Activated naive CD4-positive, alpha-beta T cell treated with anti-CD3 and anti-CD28 coated beads for 36 hours (primary cell): ENCODE measurements at regions of chr2 and their contacts with region 1.

Region 1: GRCh38 chr2:97806738-97807618 is 93.6 kb downstream of the ZAP70 start:
- DNase-seq: peak; percentile 90
- H3K4me3 Mint-ChIP-seq: no peak overlapping the region
- H3K27ac Mint-ChIP-seq: no peak overlapping the region
- H3K4me1 Mint-ChIP-seq: no peaks in the 10 kb centered on the region
- H3K27me3 Mint-ChIP-seq: no peaks in the 10 kb centered on the region

Region 2: DNA sequence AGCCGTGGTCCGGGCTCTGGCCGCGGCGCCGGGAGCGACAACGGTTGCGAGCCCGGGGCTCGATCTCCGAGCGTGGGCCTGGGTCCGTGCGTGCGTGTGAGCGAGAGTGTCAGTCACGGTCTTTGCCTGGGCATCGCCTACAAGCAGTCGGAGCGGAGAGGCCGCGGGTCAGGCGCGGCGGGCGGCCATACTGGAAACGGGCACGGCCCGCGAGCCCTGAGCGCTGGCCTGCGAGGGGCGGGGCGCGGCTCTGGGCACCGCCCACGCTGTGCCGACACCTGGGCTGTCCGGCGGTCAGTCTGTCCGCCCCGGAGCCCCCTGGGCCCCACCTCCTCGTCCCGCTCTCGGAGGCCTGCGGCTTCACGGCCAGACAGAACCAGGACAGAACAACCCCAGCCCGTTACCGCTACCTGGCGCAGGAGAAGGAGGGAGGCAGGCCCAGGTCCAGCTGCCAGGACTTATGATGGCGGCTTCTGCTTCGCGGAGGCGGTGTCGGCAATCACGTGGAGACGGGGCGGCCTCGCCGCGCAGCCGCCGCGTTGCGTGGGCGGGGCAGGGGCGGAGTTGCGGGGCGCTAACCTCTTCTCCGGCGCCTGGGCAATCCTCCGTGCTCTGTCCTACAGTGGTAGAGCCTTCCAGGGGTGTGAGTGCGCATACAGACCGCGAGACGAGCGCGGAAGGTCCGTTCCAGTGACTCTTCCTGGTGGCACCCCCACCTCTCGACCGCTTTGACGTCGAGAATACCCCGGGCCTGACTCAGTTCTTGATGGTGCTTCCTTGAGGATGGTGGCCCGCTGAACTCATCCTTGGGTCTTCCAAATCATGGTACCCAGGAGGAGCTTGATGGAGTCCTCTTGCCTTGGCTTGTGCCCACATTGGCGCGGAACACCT is 189.0 kb after region 1 on chr2 and contains the start of gene TMEM131:
- CTCF ChIA-PET with region 1: interaction called, 3 read pairs
- intact Hi-C with region 1: loop called (anchors 1 kb)
- DNase-seq: peak; percentile 96
- H3K4me3 Mint-ChIP-seq: peak within 1 kb of the TSS; percentile 95
- H3K27ac Mint-ChIP-seq: peak within 1 kb of the TSS; percentile 93
- H3K4me1 Mint-ChIP-seq: peaks cover 32% of the 10 kb centered on the region
- H3K27me3 Mint-ChIP-seq: no peaks in the 10 kb centered on the region
- total RNA-seq, gene TMEM131: 18.5 to 19.2 TPM

Region 3: DNA sequence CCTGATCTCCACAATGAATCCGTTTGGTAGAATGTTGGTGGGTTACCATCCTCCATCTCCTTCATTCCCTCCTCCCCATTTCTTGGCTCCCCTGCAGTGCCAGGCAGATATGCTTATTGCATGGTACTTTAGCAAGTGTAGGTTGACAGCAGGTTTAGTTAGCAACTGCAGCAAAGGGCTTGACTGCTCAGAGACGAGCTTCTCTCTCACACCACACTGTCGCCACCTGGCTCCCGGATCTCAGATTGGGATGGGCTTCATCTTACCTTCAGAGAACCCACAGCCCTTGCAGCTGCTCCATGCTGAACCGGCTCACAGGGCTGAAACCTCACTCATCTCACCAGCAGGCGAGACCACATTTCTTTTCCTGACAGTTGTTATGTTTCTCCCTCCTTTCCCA is 368.8 kb after region 1 on chr2:
- CTCF ChIA-PET with region 1: interaction called, 3 read pairs
- intact Hi-C with region 1: loop called (anchors 1 kb)
- DNase-seq: peak; percentile 56
- H3K4me3 Mint-ChIP-seq: no peak overlapping the region
- H3K27ac Mint-ChIP-seq: no peak overlapping the region
- H3K4me1 Mint-ChIP-seq: no peaks in the 10 kb centered on the region
- H3K27me3 Mint-ChIP-seq: peaks cover 43% of the 10 kb centered on the region

Region 4: DNA sequence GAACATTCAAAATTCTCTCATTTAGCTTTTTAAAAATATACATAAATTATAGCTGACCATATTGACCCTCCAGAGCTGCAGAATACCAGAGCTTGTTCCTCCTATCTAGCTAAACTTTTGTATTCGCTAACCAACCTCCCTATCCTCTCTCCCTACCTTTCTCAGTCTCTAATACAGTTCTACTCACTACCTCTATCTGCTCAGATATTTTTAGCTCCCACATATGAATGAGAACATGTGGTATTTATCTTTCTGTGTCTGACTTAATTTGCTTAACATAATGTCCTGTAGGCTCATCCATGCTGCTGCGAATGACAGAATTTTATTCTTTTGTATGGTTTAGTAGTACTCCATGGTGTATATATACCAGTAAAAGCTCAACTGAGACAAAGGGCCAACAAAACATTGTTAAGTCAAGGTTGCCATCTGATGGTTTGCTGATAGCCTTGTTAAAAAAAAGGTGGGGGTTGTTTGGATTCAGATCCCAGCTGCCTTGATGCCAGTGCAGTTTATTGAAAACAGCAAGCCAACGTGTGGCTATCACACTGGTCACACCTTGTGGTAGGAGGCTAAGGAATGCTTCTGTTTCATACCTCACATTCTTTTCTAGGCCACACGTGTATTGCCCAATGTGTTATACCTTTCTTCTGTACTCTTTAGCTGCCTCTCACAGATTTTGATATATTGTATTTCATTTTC is 381.5 kb after region 1 on chr2:
- CTCF ChIA-PET with region 1: interaction called, 14 read pairs
- intact Hi-C with region 1: loop called (anchors 1 kb)
- DNase-seq: no peak
- H3K4me3 Mint-ChIP-seq: no peak overlapping the region
- H3K27ac Mint-ChIP-seq: no peak overlapping the region
- H3K4me1 Mint-ChIP-seq: no peaks in the 10 kb centered on the region
- H3K27me3 Mint-ChIP-seq: no peaks in the 10 kb centered on the region

Region 5: GRCh38 chr2:98269274-98269673 is 462.3 kb after region 1 on chr2:
- CTCF ChIA-PET with region 1: interaction called, 16 read pairs
- intact Hi-C with region 1: loop called (anchors 1 kb)
- DNase-seq: peak; percentile 23
- H3K4me3 Mint-ChIP-seq: no peak overlapping the region
- H3K27ac Mint-ChIP-seq: no peak overlapping the region
- H3K4me1 Mint-ChIP-seq: no peaks in the 10 kb centered on the region
- H3K27me3 Mint-ChIP-seq: peaks cover 10% of the 10 kb centered on the region

Region 6: DNA sequence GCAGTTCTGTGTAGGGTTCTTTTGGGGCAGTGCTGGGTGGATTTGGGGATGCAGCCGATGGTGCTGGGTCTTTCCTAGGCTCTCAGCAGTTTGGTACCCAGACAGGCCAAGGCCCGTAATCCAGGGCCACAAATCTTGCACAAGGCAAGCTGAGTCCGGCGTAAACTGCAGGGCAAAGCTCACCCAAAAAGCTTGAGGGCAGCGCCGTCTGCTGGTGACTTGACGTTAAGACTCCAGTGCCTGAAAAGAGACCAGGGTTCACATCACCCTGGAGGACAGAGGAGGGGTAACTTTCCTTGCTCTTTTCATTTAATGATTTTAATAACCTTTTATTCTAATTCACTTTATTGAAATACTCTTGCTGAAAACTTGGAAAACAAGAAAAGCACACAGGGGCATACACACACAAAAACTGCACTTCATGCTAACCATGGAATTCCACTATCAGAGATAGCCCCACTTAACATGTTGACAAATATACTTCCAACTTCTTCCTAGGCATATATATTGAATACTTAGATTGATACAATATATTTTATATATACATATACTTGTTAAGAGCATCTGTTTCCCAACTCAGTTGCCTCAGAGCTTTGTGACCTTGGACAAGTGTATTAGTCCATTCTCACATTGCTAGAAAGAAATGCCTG is 578.2 kb after region 1 on chr2:
- CTCF ChIA-PET with region 1: interaction called, 14 read pairs
- intact Hi-C with region 1: loop called (anchors 1 kb)
- DNase-seq: peak; percentile 86
- H3K4me3 Mint-ChIP-seq: no peak overlapping the region
- H3K27ac Mint-ChIP-seq: no peak overlapping the region
- H3K4me1 Mint-ChIP-seq: no peaks in the 10 kb centered on the region
- H3K27me3 Mint-ChIP-seq: peaks cover 4% of the 10 kb centered on the region